ENCODE measurements at regions of chr6 and their contacts with region 1.

Region 1: DNA sequence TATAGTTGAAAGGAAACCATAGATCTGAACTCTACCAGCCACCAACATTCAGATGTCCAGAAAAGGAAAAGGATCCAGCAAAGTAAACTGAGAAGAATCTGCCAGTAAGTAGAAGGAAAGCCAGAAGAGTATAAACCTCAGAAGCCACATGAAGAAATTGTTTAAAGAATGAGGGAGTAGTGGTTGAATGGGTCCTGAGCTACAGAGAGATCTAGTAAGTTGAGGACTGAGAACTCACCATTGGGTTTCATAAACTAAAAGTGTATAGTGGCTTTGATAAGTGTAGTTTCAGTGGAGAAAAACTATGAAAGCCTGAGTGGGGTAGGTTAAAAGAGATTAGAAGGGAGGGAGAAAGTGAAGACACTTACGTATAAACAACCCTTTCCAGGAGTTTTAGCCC is 32.0 kb upstream of the SUMO4 start:
- DNase-seq: no peak
- H3K4me3 ChIP-seq: no peak overlapping the region
- H3K27ac ChIP-seq: peak overlapping the region in 1 of 4 donors; percentile 11
- H3K4me1 ChIP-seq: peaks cover 0 to 69% (median 39%) of the 10 kb centered on the region in 4 donors
- H3K27me3 ChIP-seq: no peaks in the 10 kb centered on the region
- CTCF ChIP-seq: no peak
- EP300 ChIP-seq: no peak
- POLR2A ChIP-seq: no peak

Region 2: DNA sequence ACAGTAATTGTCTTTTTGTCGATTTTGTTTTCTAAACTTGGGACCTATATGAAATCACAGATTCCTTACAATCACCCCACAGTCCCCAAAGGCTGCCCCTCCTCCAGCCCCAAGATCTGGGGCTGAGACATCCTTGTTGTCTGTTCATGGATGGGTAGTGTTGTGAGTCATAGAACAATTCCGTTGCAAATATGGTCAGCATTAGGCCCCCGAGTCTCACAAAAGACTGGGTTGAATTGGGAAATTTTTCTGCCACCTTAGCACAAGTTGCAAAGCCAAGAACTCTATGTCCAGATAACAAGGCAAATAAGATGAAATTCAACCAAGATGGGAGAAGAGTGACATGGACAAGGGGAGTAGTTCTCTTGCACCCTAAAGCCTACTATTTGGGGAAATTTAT is 61.1 kb before region 1 on chr6:
- intact Hi-C with region 1: no loop called
- DNase-seq: no peak
- H3K4me3 ChIP-seq: no peak overlapping the region
- H3K27ac ChIP-seq: no peak overlapping the region
- H3K4me1 ChIP-seq: no peaks in the 10 kb centered on the region
- H3K27me3 ChIP-seq: no peaks in the 10 kb centered on the region
- CTCF ChIP-seq: no peak
- EP300 ChIP-seq: no peak
- POLR2A ChIP-seq: no peak

Region 3: DNA sequence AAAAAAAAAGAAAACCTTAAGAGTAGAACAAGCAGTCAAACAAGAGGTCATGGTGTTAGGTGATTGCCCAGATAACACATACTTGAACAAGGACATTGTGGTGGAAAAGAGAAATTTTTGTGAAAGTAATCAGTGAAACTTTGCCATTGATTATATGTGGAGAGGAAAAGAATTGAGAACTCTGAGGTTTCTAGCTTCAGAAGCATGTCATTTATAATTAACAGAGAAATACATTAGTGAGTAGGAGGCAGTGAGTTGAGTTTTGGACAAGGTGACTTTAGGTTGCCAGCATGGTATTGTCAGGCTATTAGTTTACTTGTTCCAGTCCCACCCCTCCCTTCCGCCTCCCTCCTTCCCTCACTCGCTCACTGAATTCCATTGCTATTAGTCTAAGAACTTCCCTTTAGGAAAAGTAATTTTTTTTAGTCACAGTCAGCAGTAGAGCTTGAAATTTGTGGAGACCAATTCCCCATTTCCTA is 33.3 kb before region 1 on chr6:
- intact Hi-C with region 1: loop called (anchors 5 kb)
- DNase-seq: no peak
- H3K4me3 ChIP-seq: no peak overlapping the region
- H3K27ac ChIP-seq: peak overlapping the region in 2 of 4 donors; percentile 29 to 33
- H3K4me1 ChIP-seq: peaks cover 0 to 95% (median 83%) of the 10 kb centered on the region in 4 donors
- H3K27me3 ChIP-seq: no peaks in the 10 kb centered on the region
- CTCF ChIP-seq: no peak
- EP300 ChIP-seq: no peak
- POLR2A ChIP-seq: no peak

Measured in sigmoid colon (tissue), 7 donors.